ENCODE measurements at regions of chr9 and their contacts with region 1.

Region 1: GRCh38 chr9:33415501-33416038 is 13.2 kb upstream of the AQP7 start:
- DNase-seq: peak; percentile 84
- CTCF ChIP-seq: peak; percentile 69

Region 2: DNA sequence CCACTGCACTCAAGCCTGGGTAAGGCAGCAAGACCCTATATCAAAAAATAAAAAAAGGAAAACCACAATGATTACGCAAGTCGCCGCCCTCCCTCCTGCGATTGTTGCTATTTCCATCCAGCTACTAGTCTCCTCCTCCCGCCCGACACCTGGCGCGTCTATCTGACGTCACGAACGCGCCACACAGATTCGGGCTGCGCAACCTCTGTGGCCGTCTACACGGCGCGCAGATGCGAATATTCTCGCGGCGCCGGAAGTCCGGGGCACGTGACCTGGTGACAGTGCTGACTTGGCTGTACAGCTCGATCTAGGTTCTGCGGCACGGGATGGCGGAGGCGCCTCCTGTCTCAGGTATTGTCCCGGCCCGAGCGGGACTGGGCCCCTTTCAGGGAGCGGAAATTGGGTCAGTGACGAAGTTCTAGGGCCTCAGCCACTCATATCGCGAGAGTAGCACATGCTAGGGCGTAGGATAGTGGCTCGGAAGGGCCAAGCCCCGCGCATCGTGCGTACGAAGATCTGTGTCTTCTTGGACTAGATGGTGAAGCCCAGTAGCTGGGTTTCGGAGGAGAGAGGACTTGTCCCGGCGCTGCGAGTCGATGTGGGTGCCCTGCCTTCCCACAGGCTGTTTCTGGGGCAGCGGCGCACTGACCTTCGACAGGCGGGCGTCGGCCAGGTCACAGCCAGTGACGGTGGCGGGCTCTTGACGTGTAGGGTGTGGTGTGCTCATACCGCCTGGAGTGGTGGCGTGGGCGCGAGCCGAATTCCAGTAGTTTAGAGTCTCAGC is 125.1 kb before region 1 on chr9 and contains the start of gene NFX1:
- CTCF ChIA-PET with region 1: interaction called, 21 read pairs
- POLR2A ChIA-PET with region 1: interaction called, 6 read pairs
- DNase-seq: peak; percentile 95
- CTCF ChIP-seq: no peak

Region 3: DNA sequence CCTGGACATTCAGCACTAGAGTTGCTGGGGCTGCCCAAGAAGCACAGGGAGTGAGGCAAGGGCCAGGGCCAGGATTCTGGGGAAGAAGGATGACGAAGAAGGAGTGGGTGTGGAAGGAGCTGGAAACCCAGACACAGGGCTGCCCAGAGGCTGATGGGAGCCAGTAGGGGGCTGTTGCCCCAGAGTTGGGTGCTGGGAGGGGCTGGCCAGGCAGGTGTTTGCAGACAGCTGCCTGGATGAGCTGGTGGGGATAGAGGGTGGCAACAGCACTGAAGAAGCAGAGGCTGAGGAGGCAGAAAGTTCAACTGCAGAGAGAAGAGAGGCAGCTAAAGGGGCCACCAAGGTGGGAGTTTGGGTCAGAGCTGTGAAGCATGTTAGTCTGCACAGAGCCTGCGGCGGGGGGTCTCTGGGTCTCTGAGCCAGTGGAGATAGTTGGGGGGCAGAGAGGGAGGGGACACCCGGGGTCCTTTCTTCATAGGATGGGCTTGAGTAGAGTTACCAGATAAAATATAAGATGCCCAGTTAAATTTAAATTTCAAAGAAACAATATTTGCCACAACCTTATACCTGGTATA is 10.7 kb before region 1 on chr9:
- CTCF ChIA-PET with region 1: interaction called, 25 read pairs
- POLR2A ChIA-PET with region 1: no interaction called
- DNase-seq: no peak
- CTCF ChIP-seq: no peak

Region 4: GRCh38 chr9:33446946-33447798 is 31.6 kb after region 1 on chr9 and contains the start of gene AQP3:
- CTCF ChIA-PET with region 1: interaction called, 21 read pairs
- POLR2A ChIA-PET with region 1: no interaction called
- DNase-seq: peak; percentile 65
- CTCF ChIP-seq: peak; percentile 22

Region 5: GRCh38 chr9:33466565-33467495 is 51.3 kb after region 1 on chr9:
- CTCF ChIA-PET with region 1: interaction called, 24 read pairs
- POLR2A ChIA-PET with region 1: no interaction called
- DNase-seq: peak; percentile 83
- CTCF ChIP-seq: peak; percentile 94

Measured in GM10248 (cell line).